IMR-90 (cell line): ENCODE measurements at regions of chr12 and their contacts with region 1.

Region 1: DNA sequence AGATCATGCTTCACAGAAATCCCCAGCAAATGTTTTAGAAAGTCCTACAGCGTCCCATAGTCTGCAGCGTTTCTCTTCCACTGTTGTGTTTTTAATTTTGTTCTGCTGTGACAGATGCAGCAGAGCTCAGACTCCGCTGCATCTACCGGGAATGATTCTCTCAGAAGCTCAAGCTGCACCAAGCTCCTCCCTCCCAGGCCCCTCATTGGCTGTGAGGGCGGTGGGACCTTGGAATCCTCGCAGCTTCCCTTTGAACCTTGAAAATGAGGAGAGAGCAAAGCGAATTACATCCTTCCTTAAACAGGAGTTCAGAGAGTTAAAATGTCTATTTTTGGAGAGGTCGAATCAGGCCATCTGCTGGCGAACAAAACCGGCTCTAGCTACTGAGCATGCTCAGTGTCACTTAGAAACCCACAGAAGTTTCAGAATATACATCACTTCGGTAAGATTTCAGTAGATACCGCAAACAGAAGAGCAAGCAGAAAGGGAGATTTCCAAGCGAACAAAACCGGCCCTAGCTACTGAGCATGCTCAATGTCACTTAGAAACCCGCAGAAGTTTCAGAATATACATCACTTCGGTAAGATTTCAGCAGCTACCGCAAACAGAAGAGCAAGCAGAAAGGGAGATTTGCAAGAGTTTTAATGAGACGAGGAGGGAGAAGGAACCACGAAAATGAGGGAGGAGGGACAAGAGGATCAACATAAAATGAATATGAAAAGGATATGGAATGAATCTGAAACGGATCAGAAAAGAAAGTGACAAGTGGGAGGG is at the start of gene ABCD2:
- DNase-seq: peak; percentile 58
- ATAC-seq: peak; percentile 97
- H3K4me3 ChIP-seq: peak within 1 kb of the TSS; percentile 45
- H3K27ac ChIP-seq: no peak within 1 kb of the TSS
- H3K4me1 ChIP-seq: no peaks in the 10 kb centered on the region
- H3K27me3 ChIP-seq: no peaks in the 10 kb centered on the region
- CTCF ChIP-seq: no peak
- POLR2A ChIP-seq: no peak
- RAD21 ChIP-seq: no peak
- total RNA-seq, gene ABCD2: not detected in 2 replicates

Region 2: DNA sequence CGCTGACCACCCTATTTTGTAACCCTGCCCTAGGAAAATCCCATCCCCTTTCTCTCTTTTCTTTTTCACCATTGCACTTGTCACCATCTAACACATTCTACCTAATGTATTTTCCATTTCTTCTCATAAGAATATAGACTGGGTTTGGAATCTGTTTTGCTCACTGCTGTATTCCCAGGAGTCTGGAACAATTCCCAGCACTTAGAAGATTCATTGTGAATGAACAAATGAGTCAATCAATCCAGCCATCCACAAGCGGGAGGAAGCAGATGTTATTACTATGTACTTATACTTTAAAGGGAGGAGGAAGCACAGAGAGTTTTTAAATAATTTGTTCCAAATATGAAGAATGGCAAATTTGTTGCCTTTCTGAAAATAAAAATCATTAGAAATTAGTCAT is 319.0 kb before region 1 on chr12:
- CTCF ChIA-PET with region 1: no interaction called
- POLR2A ChIA-PET with region 1: no interaction called
- dilution Hi-C with region 1: no loop called
- in situ Hi-C with region 1: loop called (anchors 25 kb)
- intact Hi-C with region 1: no loop called
- DNase-seq: no peak
- ATAC-seq: no peak
- H3K4me3 ChIP-seq: no peak overlapping the region
- H3K27ac ChIP-seq: no peak overlapping the region
- H3K4me1 ChIP-seq: no peaks in the 10 kb centered on the region
- H3K27me3 ChIP-seq: no peaks in the 10 kb centered on the region
- CTCF ChIP-seq: no peak
- POLR2A ChIP-seq: no peak
- RAD21 ChIP-seq: no peak

Region 3: GRCh38 chr12:39329018-39329417 is 290.8 kb before region 1 on chr12:
- CTCF ChIA-PET with region 1: no interaction called
- POLR2A ChIA-PET with region 1: no interaction called
- dilution Hi-C with region 1: no loop called
- in situ Hi-C with region 1: loop called (anchors 25 kb)
- intact Hi-C with region 1: loop called (anchors 10 kb)
- DNase-seq: no peak
- ATAC-seq: no peak
- H3K4me3 ChIP-seq: no peak overlapping the region
- H3K27ac ChIP-seq: no peak overlapping the region
- H3K4me1 ChIP-seq: no peaks in the 10 kb centered on the region
- H3K27me3 ChIP-seq: no peaks in the 10 kb centered on the region
- CTCF ChIP-seq: no peak
- POLR2A ChIP-seq: no peak
- RAD21 ChIP-seq: no peak

Region 4: GRCh38 chr12:39764944-39765560 is 145.2 kb after region 1 on chr12:
- CTCF ChIA-PET with region 1: no interaction called
- POLR2A ChIA-PET with region 1: no interaction called
- dilution Hi-C with region 1: no loop called
- in situ Hi-C with region 1: no loop called
- intact Hi-C with region 1: no loop called
- DNase-seq: peak; percentile 58
- ATAC-seq: peak; percentile 86
- H3K4me3 ChIP-seq: no peak overlapping the region
- H3K27ac ChIP-seq: no peak overlapping the region
- H3K4me1 ChIP-seq: no peaks in the 10 kb centered on the region
- H3K27me3 ChIP-seq: no peaks in the 10 kb centered on the region
- CTCF ChIP-seq: peak; percentile 86
- POLR2A ChIP-seq: 0 out of 2 replicates have a peak, but pooled peaks have one; percentile 19
- RAD21 ChIP-seq: peak; percentile 87